Activated CD4-positive, alpha-beta memory T cell treated with anti-CD3 and anti-CD28 coated beads, Interleukin-2, amount 10 ng/mL, durations not matched to agents 7 days and 5 days (primary cell): ENCODE measurements at regions of chr10 and their contacts with region 1.

Region 1: DNA sequence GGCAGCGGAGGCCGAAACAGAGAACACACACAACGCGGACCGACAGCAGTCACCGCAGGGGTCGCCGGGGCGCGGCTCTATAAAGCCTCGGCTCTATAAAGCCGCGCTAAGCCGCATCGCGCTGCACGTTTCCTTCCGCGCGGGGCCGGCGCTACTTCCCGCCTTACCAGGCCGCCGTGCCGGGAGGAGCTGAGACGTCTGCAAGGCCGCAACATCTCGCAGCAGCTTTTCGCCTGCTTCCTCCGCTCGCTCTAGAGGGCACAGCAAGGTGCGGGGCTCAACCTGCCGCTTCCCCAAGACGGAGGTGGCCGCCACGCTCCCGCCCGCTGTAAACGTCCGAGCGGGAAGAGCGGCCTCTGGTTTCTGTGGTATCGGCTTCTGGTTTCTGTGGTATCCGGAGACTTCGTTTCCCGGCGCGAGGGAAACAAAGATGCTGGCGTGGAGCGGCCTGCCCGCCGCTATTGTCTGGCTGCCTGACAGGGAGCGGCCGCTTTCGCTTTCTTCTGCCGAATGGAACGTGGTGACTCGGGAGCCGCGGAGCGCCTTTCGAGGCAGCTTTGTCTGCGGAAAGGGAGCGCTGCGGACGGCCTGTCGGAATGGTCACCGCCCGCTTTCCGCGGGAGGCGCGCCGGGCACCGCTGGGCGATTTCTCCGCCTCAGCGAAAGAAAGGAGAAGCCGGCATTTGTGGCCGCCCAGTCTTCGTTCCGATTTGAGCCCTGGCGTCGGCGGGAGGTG is 91.8 kb downstream of the SPAG6 start:
- DNase-seq: peak; percentile 88
- H3K4me3 Mint-ChIP-seq: peak overlapping the region; percentile 92
- H3K27ac Mint-ChIP-seq: peak overlapping the region; percentile 95
- H3K4me1 Mint-ChIP-seq: peaks cover 47% of the 10 kb centered on the region
- H3K27me3 Mint-ChIP-seq: peaks cover 2% of the 10 kb centered on the region

Region 2: GRCh38 chr10:22003079-22003913 is 433.8 kb before region 1 on chr10 and contains the start of gene DNAJC1:
- CTCF ChIA-PET with region 1: interaction called, 4 read pairs
- POLR2A ChIA-PET with region 1: interaction called, 24 read pairs
- DNase-seq: peak; percentile 98
- H3K4me3 Mint-ChIP-seq: peak within 1 kb of the TSS; percentile 96
- H3K27ac Mint-ChIP-seq: peak within 1 kb of the TSS; percentile 93
- H3K4me1 Mint-ChIP-seq: peaks cover 30% of the 10 kb centered on the region
- H3K27me3 Mint-ChIP-seq: peaks cover 9% of the 10 kb centered on the region
- total RNA-seq, gene DNAJC1: 35.7 to 38.9 TPM

Region 3: GRCh38 chr10:22228943-22229801 is 207.9 kb before region 1 on chr10:
- CTCF ChIA-PET with region 1: no interaction called
- POLR2A ChIA-PET with region 1: interaction called, 41 read pairs
- DNase-seq: peak; percentile 83
- H3K4me3 Mint-ChIP-seq: peak overlapping the region; percentile 76
- H3K27ac Mint-ChIP-seq: peak overlapping the region; percentile 95
- H3K4me1 Mint-ChIP-seq: peaks cover 27% of the 10 kb centered on the region
- H3K27me3 Mint-ChIP-seq: peaks cover 20% of the 10 kb centered on the region

Region 4: GRCh38 chr10:22251751-22252223 is 185.3 kb before region 1 on chr10:
- CTCF ChIA-PET with region 1: interaction called, 4 read pairs
- POLR2A ChIA-PET with region 1: interaction called, 15 read pairs
- DNase-seq: peak; percentile 78
- H3K4me3 Mint-ChIP-seq: peak overlapping the region; percentile 88
- H3K27ac Mint-ChIP-seq: peak overlapping the region; percentile 97
- H3K4me1 Mint-ChIP-seq: peaks cover 44% of the 10 kb centered on the region
- H3K27me3 Mint-ChIP-seq: peaks cover 5% of the 10 kb centered on the region